ENCODE measurements at regions of chr3 and their contacts with region 1.

Region 1: GRCh38 chr3:185992831-185993374 is 55.1 kb upstream of the TRA2B start:
- DNase-seq: no peak
- H3K4me3 ChIP-seq: no peak overlapping the region
- H3K27ac ChIP-seq: no peak overlapping the region
- H3K4me1 ChIP-seq: peaks cover 19% of the 10 kb centered on the region
- CTCF ChIP-seq: no peak

Region 2: DNA sequence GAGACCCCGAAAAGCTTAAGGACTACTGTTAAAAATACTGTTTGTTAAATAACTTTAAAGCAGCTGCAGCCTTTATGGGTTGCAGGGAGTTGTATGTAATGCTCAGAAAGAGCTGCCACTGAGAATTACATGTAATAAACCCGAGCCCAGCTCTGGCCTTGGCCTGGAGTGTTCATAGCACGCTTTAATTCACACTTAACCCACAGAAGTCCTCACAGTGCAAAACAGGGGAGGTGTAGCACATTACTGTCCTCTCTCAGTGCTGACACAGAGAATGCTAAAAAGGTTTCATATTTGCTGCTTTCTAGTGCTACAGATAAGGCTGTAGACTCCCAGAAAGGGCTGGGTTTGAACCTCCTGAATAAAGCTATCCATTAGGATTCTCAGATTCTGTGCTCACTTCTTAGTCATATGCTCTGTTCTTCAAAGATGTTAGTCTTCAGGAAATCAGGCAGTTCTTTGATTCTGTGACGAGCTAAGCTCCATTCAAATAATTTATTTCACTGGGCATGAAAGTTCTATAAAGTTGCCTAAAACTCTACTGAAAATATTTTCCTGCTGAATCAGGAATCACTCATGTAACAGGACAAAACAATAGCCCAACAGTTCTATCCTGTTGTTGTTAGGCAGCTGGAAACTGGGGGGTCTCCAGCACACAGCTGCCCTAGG is 298.8 kb before region 1 on chr3:
- CTCF ChIA-PET with region 1: no interaction called
- POLR2A ChIA-PET with region 1: no interaction called
- intact Hi-C with region 1: no loop called
- DNase-seq: no peak
- H3K4me3 ChIP-seq: no peak overlapping the region
- H3K27ac ChIP-seq: no peak overlapping the region
- H3K4me1 ChIP-seq: no peaks in the 10 kb centered on the region
- CTCF ChIP-seq: no peak

Region 3: GRCh38 chr3:185912929-185913901 is 79.7 kb before region 1 on chr3:
- CTCF ChIA-PET with region 1: no interaction called
- POLR2A ChIA-PET with region 1: no interaction called
- intact Hi-C with region 1: loop called (anchors 2 kb)
- DNase-seq: no peak
- H3K4me3 ChIP-seq: no peak overlapping the region
- H3K27ac ChIP-seq: no peak overlapping the region
- H3K4me1 ChIP-seq: no peaks in the 10 kb centered on the region
- CTCF ChIP-seq: no peak